Posterior vena cava (tissue), 2 donors: ENCODE measurements at regions of chr2 and their contacts with region 1.

Region 1: DNA sequence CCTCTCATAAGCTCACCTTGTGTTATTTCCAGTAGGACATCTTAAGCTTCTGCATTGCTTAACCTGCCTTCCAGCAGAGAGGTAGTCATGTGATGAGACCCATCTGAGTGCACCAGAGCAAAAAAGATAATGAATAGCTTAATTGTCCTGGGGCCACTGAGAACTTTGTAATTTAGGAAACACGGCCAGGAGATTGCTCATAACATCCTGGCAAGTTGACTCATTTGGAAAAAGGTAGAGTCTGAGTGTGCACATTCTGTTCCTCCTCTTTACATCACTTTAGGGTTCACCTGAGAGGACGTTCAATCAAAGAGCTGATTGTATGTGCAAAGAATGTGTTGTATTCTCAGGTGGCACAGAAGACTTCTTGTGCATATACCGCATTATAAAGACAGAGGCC is 830.2 kb upstream of the SOX11 start:
- DNase-seq: no peak

Region 2: GRCh38 chr2:4803396-4803795 is 58.6 kb before region 1 on chr2:
- intact Hi-C with region 1: no loop called
- DNase-seq: no peak

Region 3: DNA sequence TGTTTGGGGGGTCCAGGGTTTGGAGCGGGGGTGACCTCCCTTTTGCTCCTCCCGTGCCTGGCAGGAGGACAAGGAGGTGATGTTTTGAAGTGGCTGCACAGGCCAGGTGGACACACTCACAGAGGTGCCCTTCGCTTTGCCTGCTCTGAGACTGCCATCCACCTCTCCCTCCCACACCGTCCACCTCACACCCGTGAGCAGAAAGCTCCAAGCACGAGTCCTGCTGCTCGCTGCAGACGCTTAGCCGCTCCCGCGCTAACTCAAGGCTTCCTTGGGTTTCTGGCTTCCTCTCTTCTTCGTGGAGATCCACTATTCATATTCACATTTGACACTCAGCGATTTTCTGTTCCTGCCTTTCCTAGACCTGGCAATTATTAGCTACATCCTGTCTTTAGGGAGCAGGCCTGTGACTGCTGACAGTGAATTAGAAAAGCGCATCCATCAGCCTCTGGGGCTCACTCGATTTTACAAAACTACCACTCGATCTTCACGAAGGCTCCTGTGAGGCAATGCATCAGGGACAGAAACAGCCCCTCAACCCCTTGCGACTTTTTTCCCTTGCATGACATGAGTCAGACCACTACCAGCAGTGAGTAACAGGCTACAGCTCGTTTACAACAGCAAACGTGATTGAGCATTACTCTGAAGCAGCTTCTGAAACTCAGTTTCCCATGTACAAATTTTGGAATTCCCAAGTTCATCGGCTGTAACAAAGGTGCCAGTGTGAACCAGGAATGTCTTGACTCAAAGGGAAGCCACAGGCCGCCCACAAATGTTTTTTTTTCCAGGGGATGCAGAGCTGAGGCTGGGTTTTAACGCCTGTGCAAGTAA is 591.4 kb after region 1 on chr2:
- intact Hi-C with region 1: loop called in 1 of 2 experiments (anchors 5 kb)
- DNase-seq: no peak